Naive thymus-derived CD4-positive, alpha-beta T cell (primary cell): ENCODE measurements at regions of chr17 and their contacts with region 1.

Region 1: DNA sequence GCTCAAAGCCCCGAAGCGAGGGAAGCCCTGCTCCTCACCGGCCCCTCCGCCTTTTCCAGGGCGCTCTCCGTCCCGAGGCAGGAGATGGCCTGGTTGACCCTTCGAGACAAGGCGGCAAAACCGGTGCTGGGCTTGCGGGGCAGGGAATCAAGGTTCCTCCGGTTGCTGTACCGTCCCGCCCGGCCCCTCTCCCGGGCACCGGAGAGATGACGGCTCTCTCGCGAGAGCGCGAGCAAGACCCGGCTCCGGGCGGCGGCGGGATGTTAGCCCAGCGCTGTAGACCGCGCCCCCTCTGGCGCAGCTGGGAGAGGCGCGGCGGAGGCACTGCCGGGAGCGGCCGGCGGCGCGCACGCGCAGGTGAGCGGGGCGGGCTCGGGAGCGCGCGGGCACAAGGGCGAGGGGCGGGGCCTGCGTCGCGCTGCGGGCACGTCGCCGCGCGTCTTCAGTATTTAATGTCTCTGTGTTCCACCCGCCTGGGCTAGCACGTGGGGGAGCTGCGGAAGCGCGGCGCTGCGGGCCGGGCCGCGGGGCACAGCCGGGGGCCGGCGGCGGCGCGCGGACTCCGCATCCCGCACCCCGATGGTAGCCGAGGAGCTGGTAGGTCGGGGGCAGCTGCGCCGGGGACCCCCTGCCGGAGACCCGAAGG is at the start of gene AKAP1:
- DNase-seq: peak; percentile 91 to 98 (median 97)
- ATAC-seq: peak; percentile 95
- H3K4me3 ChIP-seq: peak within 1 kb of the TSS; percentile 96
- H3K4me3 Mint-ChIP-seq: peak within 1 kb of the TSS; percentile 89 to 95 (median 92)
- H3K27ac ChIP-seq: peak within 1 kb of the TSS; percentile 91
- H3K27ac Mint-ChIP-seq: peak within 1 kb of the TSS; percentile 86 to 95 (median 93)
- H3K4me1 ChIP-seq: peaks cover 9 to 12% of the 10 kb centered on the region in 2 donors
- H3K4me1 Mint-ChIP-seq: peaks cover 27 to 43% (median 34%) of the 10 kb centered on the region in 7 donors
- H3K27me3 ChIP-seq: no peaks in the 10 kb centered on the region
- H3K27me3 Mint-ChIP-seq: peaks cover 0 to 12% (median 0%) of the 10 kb centered on the region in 5 donors
- total RNA-seq, gene AKAP1: 22.2 to 35.8 (median 34.3) TPM

Region 2: DNA sequence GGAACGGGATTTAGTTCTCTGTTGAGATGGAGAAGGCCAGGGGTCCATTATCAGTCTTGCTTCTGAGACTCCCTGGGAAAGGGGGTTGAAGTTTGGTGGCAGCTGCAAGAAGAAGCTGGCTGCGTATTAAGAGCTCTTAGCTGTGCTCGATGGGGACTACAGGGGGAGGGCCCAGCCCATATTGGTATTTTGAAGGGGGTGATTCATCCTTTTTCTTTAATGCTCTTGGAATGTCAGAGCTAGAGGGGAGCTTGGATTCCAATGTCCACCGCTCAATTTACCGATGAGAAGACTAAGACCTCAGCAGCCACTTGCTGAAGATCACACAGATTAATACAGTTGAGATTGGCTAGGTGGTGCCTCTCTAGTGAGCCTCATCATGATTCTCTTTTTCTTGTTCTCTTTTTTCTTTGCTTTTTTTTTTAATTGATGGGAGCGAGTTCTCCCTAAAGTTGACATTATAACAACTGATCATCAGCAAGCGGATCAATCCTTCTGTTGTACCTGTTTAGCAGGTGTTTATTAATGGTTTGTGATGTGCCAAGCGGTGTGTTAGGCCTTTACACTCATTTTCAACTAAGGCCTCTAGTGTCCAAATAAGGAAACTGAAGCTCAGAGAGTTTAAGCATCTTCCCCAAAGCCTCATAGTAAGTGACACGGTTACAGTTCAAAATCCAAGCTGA is 486.3 kb before region 1 on chr17:
- CTCF ChIA-PET with region 1: interaction called, 5 read pairs
- POLR2A ChIA-PET with region 1: no interaction called
- intact Hi-C with region 1: loop called in 1 of 2 experiments (anchors 1 kb)
- DNase-seq: no peak
- ATAC-seq: peak; percentile 23
- H3K4me3 ChIP-seq: no peak overlapping the region
- H3K4me3 Mint-ChIP-seq: peak overlapping the region; percentile 30 to 96 (median 84)
- H3K27ac ChIP-seq: peak overlapping the region; percentile 88
- H3K27ac Mint-ChIP-seq: peak overlapping the region in 8 of 9 donors; percentile 98 to 100 (median 99)
- H3K4me1 ChIP-seq: peaks cover 8 to 58% of the 10 kb centered on the region in 2 donors
- H3K4me1 Mint-ChIP-seq: peaks cover 34 to 70% (median 62%) of the 10 kb centered on the region in 7 donors
- H3K27me3 ChIP-seq: peaks cover 0 to 8% of the 10 kb centered on the region in 2 donors
- H3K27me3 Mint-ChIP-seq: peaks cover 0 to 41% (median 9%) of the 10 kb centered on the region in 5 donors

Region 3: DNA sequence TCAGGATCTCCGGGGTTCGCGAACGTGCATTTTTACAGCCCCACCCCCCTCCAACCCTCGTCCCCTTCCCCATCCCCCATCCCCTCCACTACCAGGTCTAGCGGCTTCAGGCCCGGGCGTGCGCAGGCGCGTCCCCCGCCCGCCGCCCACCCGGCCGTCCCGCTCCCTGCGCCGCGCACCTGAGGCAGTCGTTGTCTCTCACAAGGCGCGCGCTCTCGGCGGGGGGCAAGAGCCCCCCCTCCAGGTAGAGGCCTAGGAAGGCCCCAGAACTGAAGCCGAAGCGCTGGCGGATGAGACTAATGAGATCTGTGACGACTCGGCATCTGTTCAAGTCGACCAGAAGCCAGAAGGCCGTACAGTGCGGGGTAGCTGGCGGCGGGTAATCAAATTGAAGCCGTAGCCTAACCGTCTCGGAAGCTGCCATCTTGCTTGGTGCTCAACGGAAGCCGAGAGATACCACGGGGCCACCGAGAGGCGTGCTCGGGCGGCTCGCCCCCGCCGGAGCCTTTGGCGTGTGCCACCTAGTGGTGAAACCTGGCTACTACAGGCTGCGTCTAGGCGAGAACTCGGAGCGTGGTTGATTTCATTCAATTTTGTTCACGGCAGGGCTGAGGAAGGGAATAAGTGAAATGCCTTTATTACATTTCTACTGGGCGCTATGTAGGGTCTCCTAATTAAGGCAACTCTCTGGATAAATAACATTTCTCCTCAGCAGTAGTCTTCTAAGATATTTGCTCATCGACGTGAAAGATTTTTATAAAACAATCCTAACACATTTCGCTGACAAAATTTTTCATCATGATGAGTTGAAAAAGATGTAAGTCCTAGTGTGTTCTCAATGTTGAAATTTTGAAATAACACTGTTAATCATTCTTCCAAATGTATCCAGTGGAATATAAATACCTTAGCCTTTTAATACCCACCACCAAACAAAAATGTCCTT is 124.1 kb before region 1 on chr17 and contains the start of gene COIL:
- CTCF ChIA-PET with region 1: no interaction called
- POLR2A ChIA-PET with region 1: interaction called, 3 read pairs
- intact Hi-C with region 1: loop called (anchors 1 kb)
- DNase-seq: peak; percentile 90 to 96 (median 92)
- ATAC-seq: peak; percentile 100
- H3K4me3 ChIP-seq: peak within 1 kb of the TSS; percentile 80
- H3K4me3 Mint-ChIP-seq: peak within 1 kb of the TSS; percentile 80 to 93 (median 86)
- H3K27ac ChIP-seq: peak within 1 kb of the TSS; percentile 97
- H3K27ac Mint-ChIP-seq: peak within 1 kb of the TSS; percentile 78 to 95 (median 91)
- H3K4me1 ChIP-seq: peaks cover 6 to 11% of the 10 kb centered on the region in 2 donors
- H3K4me1 Mint-ChIP-seq: peaks cover 14 to 34% (median 28%) of the 10 kb centered on the region in 7 donors
- H3K27me3 ChIP-seq: no peaks in the 10 kb centered on the region
- H3K27me3 Mint-ChIP-seq: peaks cover 0 to 3% (median 0%) of the 10 kb centered on the region in 5 donors
- total RNA-seq, gene COIL: 13.1 to 22.7 (median 19.0) TPM

Region 4: GRCh38 chr17:57114085-57114673 is 29.3 kb after region 1 on chr17:
- CTCF ChIA-PET with region 1: no interaction called
- POLR2A ChIA-PET with region 1: interaction called, 3 read pairs
- intact Hi-C with region 1: loop called in 1 of 2 experiments (anchors 1 kb)
- DNase-seq: peak; percentile 24 to 72 (median 52)
- ATAC-seq: peak; percentile 81
- H3K4me3 ChIP-seq: no peak overlapping the region
- H3K4me3 Mint-ChIP-seq: no peak overlapping the region
- H3K27ac ChIP-seq: no peak overlapping the region
- H3K27ac Mint-ChIP-seq: no peak overlapping the region
- H3K4me1 ChIP-seq: no peaks in the 10 kb centered on the region
- H3K4me1 Mint-ChIP-seq: peaks cover 0 to 4% (median 0%) of the 10 kb centered on the region in 7 donors
- H3K27me3 ChIP-seq: no peaks in the 10 kb centered on the region
- H3K27me3 Mint-ChIP-seq: no peaks in the 10 kb centered on the region

Region 5: GRCh38 chr17:58219001-58219788 is 1134.3 kb after region 1 on chr17 and contains the start of gene MKS1:
- CTCF ChIA-PET with region 1: no interaction called
- POLR2A ChIA-PET with region 1: no interaction called
- intact Hi-C with region 1: loop called in 1 of 2 experiments (anchors 5 kb)
- DNase-seq: peak; percentile 90 to 96 (median 94)
- ATAC-seq: peak; percentile 98
- H3K4me3 ChIP-seq: peak within 1 kb of the TSS; percentile 68
- H3K4me3 Mint-ChIP-seq: peak within 1 kb of the TSS; percentile 86 to 96 (median 94)
- H3K27ac ChIP-seq: peak within 1 kb of the TSS; percentile 77
- H3K27ac Mint-ChIP-seq: peak within 1 kb of the TSS; percentile 92 to 98 (median 97)
- H3K4me1 ChIP-seq: peaks cover 8 to 9% of the 10 kb centered on the region in 2 donors
- H3K4me1 Mint-ChIP-seq: peaks cover 7 to 33% (median 23%) of the 10 kb centered on the region in 7 donors
- H3K27me3 ChIP-seq: no peaks in the 10 kb centered on the region
- H3K27me3 Mint-ChIP-seq: peaks cover 0 to 18% (median 0%) of the 10 kb centered on the region in 5 donors
- total RNA-seq, gene MKS1: 10.0 to 29.1 (median 19.7) TPM